Dorsolateral prefrontal cortex (tissue), 120 donors: ENCODE measurements at regions of chr22 and their contacts with region 1.

Region 1: DNA sequence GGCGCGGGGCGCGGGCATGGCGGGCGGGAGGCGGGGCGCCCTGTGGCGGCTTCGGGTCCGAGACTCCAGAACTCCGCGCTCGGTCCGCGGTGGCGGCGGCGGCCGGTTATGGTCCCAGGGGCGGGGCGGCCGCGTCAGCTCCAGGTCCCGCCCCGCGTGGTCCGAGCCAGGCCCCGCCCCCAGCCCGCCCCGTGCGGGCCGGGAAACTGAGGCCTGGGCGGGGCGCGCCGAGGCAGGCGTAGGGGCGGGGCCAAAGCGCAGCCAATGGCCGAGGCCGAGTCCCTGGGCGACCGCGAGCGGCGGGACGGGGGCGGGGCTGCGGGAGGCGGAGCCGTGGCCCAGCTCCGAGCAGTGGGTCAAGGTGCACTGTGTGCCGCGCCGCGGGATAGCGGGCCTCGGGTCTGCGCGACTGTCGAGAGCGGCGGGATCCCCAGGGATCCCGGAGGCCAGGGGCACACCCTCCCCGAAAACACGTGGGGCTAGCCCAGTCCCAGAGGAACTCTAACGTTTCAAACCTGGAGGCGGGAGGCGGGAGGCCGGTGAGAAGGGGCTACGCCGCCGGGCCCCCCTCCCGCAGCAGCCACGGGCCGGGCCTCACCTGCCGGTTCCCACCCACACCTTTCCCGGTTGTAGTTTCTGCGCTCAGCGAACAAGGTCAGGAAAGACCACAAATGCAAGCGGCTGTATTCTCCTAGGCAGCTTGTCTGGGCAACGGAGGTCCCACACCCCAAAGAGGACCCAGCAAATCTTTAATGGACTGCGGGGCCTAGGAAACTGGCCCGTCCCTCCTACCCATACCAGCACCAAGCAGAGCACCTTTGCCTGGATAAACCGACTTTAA is at the start of gene SLC25A1:
- DNase-seq: peak; percentile 84 to 96 (median 90)
- H3K4me3 ChIP-seq: peak within 1 kb of the TSS; percentile 55 to 96 (median 82)
- H3K27ac ChIP-seq: peak within 1 kb of the TSS in 58 of 59 donors; percentile 22 to 93 (median 81)
- H3K27me3 ChIP-seq: no peaks in the 10 kb centered on the region
- CTCF ChIP-seq: no peak
- total RNA-seq, gene SLC25A1: 20.9 to 57.4 (median 34.4) TPM

Region 2: DNA sequence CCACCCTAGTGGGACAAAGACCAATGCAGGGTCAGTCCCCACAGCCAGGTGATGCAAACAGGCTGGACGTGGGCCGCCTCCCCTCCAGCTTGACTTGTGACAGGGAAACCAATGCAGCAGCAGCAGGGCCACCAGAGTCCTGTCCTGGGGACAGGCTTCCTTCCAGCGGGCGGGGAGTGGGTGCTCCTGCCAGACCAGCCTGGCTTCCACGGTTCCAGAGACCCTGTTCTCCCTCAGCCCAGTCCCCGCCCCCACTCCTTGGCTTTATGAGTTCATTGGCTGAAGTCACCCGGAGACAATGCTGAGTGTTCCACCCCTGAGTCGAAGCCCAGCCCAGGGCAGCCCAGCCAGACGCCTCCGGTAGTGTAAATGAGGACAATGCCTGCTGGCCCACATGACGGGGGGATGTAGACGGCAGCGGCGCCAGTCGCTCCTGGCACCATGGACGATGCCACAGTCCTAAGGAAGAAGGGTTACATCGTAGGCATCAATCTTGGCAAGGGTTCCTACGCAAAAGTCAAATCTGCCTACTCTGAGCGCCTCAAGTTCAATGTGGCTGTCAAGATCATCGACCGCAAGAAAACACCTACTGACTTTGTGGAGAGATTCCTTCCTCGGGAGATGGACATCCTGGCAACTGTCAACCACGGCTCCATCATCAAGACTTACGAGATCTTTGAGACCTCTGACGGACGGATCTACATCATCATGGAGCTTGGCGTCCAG is 47.8 kb before region 1 on chr22 and contains the start of gene TSSK2:
- intact Hi-C with region 1: no loop called
- DNase-seq: no peak
- H3K4me3 ChIP-seq: no peak within 1 kb of the TSS
- H3K27ac ChIP-seq: no peak within 1 kb of the TSS
- H3K27me3 ChIP-seq: no peaks in the 10 kb centered on the region
- CTCF ChIP-seq: no peak
- total RNA-seq, gene TSSK2: 0.21 to 0.34 (median 0.25) TPM in 4 of 120 experiments, not detected in the others

Region 3: GRCh38 chr22:19143967-19144400 is 34.9 kb before region 1 on chr22:
- intact Hi-C with region 1: loop called (anchors 2 kb)
- DNase-seq: peak in 1 of 10 donors; percentile 22
- H3K4me3 ChIP-seq: peak overlapping the region; percentile 55 to 100 (median 93)
- H3K27ac ChIP-seq: peak overlapping the region in 51 of 59 donors; percentile 16 to 89 (median 69)
- H3K27me3 ChIP-seq: peaks cover 0 to 17% (median 12%) of the 10 kb centered on the region in 45 donors
- CTCF ChIP-seq: no peak

Region 4: GRCh38 chr22:19214078-19214473 is 35.2 kb after region 1 on chr22:
- intact Hi-C with region 1: no loop called
- DNase-seq: peak in 1 of 10 donors; percentile 26
- H3K4me3 ChIP-seq: peak overlapping the region in 3 of 59 donors; percentile 25 to 42 (median 32)
- H3K27ac ChIP-seq: peak overlapping the region in 39 of 59 donors; percentile 2 to 85 (median 61)
- H3K27me3 ChIP-seq: no peaks in the 10 kb centered on the region
- CTCF ChIP-seq: no peak

Region 5: GRCh38 chr22:19232623-19233022 is 53.7 kb after region 1 on chr22:
- intact Hi-C with region 1: loop called in 1 of 2 experiments (anchors 10 kb)
- DNase-seq: no peak
- H3K4me3 ChIP-seq: no peak overlapping the region
- H3K27ac ChIP-seq: no peak overlapping the region
- H3K27me3 ChIP-seq: no peaks in the 10 kb centered on the region
- CTCF ChIP-seq: no peak

Region 6: DNA sequence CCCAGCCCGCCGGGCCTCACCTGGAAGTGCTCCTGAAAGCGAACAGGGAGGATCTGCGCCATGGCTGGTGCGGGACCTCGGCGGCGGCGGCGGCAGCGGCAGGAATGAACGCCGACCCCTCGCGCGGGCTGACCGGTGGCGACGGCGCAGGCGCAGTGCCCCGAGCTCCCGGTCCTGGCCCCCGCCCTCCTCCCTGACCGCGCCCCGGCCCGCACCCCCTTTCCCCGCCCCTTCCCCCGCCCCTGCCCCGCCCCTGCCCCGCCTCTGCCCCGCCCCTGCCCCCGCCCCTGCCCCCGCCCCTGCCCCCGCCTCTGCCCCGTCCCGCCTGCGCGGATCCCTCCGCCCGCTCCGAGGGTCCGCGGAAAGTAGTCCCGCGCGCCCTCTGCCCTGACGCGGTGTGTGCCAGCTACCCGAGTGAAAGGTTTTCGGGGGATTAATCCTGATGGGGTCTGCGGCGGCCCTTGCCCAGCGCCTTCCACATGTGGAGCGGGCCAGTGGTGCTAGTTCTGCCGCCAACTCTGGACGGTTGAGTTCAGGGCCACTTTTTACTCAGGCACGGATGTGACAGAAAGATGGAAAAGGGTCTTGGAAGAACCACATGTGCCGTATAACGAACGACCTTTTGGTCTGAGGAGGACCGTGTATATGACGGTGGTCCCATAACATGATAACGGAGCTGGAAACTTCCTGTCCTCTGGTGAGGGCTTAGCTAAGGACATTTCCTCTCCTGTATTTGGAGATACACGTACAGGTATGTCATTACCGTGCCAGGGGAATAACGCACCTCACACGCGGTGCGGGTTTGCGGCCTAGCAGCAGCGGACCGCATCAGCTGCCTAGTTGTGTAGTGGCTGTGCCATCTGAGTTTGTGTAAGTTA is 112.9 kb after region 1 on chr22 and contains the start of gene CLTCL1:
- intact Hi-C with region 1: loop called (anchors 2 kb)
- DNase-seq: peak; percentile 54 to 84 (median 72)
- H3K4me3 ChIP-seq: peak within 1 kb of the TSS; percentile 48 to 97 (median 82)
- H3K27ac ChIP-seq: peak within 1 kb of the TSS in 38 of 59 donors; percentile 6 to 84 (median 55)
- H3K27me3 ChIP-seq: peaks cover 0 to 7% (median 0%) of the 10 kb centered on the region in 45 donors
- CTCF ChIP-seq: peak in 4 of 56 donors; percentile 10 to 21 (median 16)
- total RNA-seq, gene CLTCL1: 3.5 to 16.2 (median 9.0) TPM

Region 7: GRCh38 chr22:19447388-19448075 is 268.7 kb after region 1 on chr22 and contains the start of gene C22orf39:
- intact Hi-C with region 1: loop called in 1 of 2 experiments (anchors 5 kb)
- DNase-seq: peak; percentile 90 to 97 (median 95)
- H3K4me3 ChIP-seq: peak within 1 kb of the TSS; percentile 63 to 99 (median 93)
- H3K27ac ChIP-seq: peak within 1 kb of the TSS; percentile 21 to 97 (median 87)
- H3K27me3 ChIP-seq: no peaks in the 10 kb centered on the region
- CTCF ChIP-seq: peak in 12 of 56 donors; percentile 6 to 39 (median 20)
- total RNA-seq, gene C22orf39: 37.4 to 76.4 (median 59.4) TPM